ENCODE measurements at regions of chr16 and their contacts with region 1.

Region 1: DNA sequence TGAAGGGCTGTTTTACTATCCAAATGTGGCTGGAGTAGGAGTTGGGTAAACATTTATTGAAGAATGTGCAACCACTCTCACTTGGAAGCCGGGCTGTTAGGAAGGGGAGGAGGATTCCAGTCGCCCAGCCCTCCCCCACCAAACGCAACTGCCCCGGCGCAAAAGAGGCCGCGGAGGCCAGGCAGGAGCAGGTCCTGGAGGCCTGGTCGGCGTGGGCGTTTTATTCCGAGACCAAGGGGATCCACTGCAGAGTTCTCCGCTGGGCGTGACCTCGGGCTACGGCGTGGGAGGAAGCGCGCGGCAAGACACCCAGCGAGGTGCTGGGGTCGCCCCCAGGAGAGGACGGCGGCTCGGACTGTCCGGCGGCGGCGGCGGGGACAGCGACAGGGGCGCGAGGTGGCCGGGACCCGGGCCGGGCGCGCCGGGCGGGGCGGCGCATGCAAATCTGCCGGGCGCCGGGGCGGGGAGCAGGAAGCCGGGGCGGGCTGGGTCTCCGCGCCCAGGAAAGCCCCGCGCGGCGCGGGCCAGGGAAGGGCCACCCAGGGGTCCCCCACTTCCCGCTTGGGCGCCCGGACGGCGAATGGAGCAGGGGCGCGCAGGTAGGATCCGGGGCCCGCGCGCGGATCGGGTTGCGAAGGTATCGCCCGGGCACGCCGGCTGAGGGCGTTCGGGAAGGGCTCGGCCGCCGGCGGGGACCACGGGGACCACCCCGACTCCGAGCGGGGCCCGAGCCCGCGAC is at the start of gene IL4R:
- DNase-seq: peak; percentile 91
- ATAC-seq: peak; percentile 10
- H3K4me3 Mint-ChIP-seq: peak within 1 kb of the TSS; percentile 89
- H3K27ac Mint-ChIP-seq: peak within 1 kb of the TSS; percentile 98
- H3K4me1 Mint-ChIP-seq: peaks cover 26% of the 10 kb centered on the region
- H3K27me3 Mint-ChIP-seq: no peaks in the 10 kb centered on the region
- CTCF ChIP-seq: no peak
- total RNA-seq, gene IL4R: 236 to 245 TPM

Region 2: GRCh38 chr16:26877421-26877820 is 436.2 kb before region 1 on chr16:
- CTCF ChIA-PET with region 1: no interaction called
- POLR2A ChIA-PET with region 1: no interaction called
- intact Hi-C with region 1: no loop called
- DNase-seq: no peak
- ATAC-seq: no peak
- H3K4me3 Mint-ChIP-seq: no peak overlapping the region
- H3K27ac Mint-ChIP-seq: no peak overlapping the region
- H3K4me1 Mint-ChIP-seq: no peaks in the 10 kb centered on the region
- H3K27me3 Mint-ChIP-seq: peaks cover 14% of the 10 kb centered on the region
- CTCF ChIP-seq: no peak

Region 3: DNA sequence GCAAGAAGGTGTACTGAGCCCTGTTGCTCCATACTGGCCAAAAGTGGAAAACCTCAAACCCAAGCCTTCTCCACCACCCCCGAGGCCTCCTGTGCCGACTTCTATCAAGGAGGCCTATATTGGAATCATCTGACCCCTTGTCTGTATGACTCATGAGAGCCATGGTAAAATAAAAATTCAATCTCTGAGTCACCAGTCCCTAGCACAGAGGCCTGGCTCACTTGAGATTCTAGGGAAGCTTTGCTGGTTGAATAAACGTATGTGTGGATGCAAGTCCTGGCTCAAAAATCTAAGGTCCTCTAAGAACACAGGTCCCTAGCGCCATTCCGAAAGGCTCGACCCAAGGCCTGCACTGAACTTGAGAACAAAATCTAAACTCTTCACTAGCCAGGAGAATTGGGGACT is 60.1 kb before region 1 on chr16:
- CTCF ChIA-PET with region 1: interaction called, 6 read pairs
- POLR2A ChIA-PET with region 1: interaction called, 26 read pairs
- intact Hi-C with region 1: loop called (anchors 1 kb)
- DNase-seq: peak; percentile 44
- ATAC-seq: peak; percentile 52
- H3K4me3 Mint-ChIP-seq: peak overlapping the region; percentile 50
- H3K27ac Mint-ChIP-seq: peak overlapping the region; percentile 96
- H3K4me1 Mint-ChIP-seq: peaks cover 86% of the 10 kb centered on the region
- H3K27me3 Mint-ChIP-seq: no peaks in the 10 kb centered on the region
- CTCF ChIP-seq: no peak

Region 4: DNA sequence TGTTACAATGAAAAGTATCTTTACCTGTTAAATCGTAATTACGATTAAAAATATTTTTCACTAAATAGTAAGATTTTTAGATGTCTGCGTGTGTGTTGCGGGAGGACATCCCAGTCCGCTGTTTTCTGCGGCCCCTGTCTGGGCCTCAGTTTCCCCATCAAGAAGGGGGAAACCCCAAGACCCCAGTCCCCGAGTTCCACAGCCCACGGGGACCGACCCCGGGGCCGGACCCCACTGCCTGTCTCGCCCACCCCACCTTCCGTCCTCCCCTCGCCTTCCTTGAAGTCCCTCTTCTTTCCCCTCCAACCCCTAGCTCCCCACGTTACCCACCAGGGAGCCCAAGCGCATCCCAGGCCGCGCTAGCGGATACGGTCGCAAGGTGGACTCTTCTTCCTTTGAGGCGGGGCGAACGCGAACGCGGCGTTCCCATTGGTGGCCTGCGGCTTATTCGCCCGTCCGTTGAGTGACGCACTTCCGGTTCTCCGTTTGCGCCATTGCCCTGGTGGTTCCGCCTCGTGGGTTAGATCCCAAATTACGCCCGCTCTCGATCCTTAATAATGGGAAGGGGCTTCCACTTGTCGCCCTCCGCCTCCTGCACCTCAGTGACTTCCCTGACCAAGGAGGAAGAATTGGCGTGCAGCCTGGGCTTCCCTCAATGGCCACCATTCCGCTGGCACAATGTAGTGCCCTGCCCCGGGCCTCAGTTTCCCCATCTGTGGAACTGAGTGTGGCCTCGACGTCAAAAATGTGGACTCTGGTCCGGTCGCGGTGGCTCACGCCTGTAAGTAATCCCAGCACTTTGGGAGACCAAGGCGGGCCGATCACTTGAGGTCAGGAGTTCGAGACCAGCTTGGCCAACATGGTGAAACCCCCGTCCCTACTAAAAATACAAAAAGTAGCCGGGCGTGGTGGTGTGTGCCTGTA is 45.0 kb before region 1 on chr16 and contains the start of gene NSMCE1:
- CTCF ChIA-PET with region 1: interaction called, 17 read pairs
- POLR2A ChIA-PET with region 1: interaction called, 106 read pairs
- intact Hi-C with region 1: loop called (anchors 5 kb)
- DNase-seq: peak; percentile 99
- ATAC-seq: peak; percentile 97
- H3K4me3 Mint-ChIP-seq: peak within 1 kb of the TSS; percentile 91
- H3K27ac Mint-ChIP-seq: peak within 1 kb of the TSS; percentile 99
- H3K4me1 Mint-ChIP-seq: peaks cover 71% of the 10 kb centered on the region
- H3K27me3 Mint-ChIP-seq: no peaks in the 10 kb centered on the region
- CTCF ChIP-seq: no peak
- total RNA-seq, gene NSMCE1: 150 to 156 TPM

Region 5: DNA sequence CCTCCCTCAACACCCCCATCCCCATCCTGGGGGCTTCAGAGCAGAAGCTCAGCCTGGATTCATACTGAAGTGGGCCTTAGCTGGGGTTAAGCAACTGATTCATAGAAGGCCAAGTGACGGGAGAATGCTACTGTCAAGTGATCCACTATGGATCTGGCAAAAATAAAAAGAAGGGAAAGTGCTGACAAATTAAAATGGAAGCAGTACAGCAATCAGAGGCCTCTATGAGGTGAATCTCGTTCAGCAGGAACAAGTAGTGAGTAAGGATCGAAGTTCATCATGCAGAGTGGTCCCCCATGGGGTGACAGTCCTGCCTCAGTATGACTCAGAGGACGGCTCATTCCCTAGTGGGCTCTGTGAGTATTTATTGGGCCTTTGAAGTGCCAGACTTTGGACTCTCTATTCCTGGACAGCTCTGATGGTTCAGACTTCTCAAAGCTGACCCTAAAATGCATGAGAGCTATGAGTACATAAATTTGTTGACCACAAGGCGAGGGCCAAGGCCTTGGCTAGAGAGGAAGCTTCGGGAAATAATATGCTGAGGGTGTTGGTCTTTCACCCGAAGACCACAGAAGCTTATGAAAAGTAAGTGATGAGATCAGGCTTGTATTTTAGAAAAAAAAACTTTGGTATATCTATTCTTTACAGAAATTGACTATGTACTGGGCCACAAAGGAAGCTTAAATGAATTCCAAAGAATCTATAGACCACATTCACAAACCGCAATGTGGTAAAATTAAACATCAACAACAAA is 39.7 kb before region 1 on chr16:
- CTCF ChIA-PET with region 1: interaction called, 17 read pairs
- POLR2A ChIA-PET with region 1: interaction called, 106 read pairs
- intact Hi-C with region 1: loop called (anchors 5 kb)
- DNase-seq: peak; percentile 73
- ATAC-seq: peak; percentile 93
- H3K4me3 Mint-ChIP-seq: peak overlapping the region; percentile 54
- H3K27ac Mint-ChIP-seq: peak overlapping the region; percentile 96
- H3K4me1 Mint-ChIP-seq: peaks cover 57% of the 10 kb centered on the region
- H3K27me3 Mint-ChIP-seq: no peaks in the 10 kb centered on the region
- CTCF ChIP-seq: peak; percentile 25

Region 6: GRCh38 chr16:27286451-27286850 is 27.1 kb before region 1 on chr16:
- CTCF ChIA-PET with region 1: interaction called, 3 read pairs
- POLR2A ChIA-PET with region 1: interaction called, 40 read pairs
- intact Hi-C with region 1: no loop called
- DNase-seq: no peak
- ATAC-seq: no peak
- H3K4me3 Mint-ChIP-seq: no peak overlapping the region
- H3K27ac Mint-ChIP-seq: no peak overlapping the region
- H3K4me1 Mint-ChIP-seq: peaks cover 64% of the 10 kb centered on the region
- H3K27me3 Mint-ChIP-seq: peaks cover 2% of the 10 kb centered on the region
- CTCF ChIP-seq: no peak

Region 7: DNA sequence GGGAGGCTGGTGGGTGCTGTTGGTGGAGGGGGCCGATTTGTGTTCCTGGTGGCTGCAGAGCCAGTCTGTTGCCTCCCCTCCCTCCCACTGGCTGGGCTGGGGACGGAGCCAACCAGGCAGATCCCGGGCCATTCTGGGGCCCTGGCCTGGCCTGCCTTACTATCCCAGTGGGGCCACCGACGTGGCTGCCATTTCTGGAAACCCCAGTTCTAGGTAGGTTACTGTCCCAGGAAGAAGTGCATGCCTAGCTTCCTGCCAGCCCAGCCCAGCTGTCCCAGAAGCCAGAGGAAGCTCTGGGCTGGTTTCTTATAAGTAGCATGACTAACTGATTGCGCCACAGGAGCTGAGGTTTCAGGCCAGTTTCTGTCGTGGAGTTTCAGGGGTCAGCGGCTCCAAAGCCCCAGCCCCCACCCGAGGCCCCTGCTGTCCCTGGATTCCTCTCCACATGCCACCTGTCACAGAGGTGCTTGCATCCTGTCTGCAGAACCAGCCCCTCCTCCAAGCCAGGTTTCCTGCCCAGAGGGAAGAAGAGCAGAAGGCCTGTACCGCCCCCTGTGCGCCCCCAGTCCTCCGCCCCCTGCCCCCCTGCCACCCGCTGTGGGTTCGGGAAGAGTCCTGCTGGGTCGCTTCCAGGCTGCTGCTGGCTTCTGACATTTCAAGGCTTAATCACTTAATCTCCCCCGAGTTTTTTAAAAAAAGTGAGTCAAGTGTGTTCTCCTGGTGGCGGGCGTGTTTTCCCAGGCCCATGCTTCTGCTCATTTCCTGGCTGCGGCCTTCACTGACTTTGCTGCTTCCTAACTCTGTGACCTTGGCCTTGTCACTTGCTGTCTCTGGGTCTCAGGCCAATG is 13.4 kb after region 1 on chr16:
- CTCF ChIA-PET with region 1: interaction called, 4 read pairs
- POLR2A ChIA-PET with region 1: interaction called, 29 read pairs
- intact Hi-C with region 1: no loop called
- DNase-seq: peak; percentile 69
- ATAC-seq: peak; percentile 70
- H3K4me3 Mint-ChIP-seq: peak overlapping the region; percentile 49
- H3K27ac Mint-ChIP-seq: peak overlapping the region; percentile 93
- H3K4me1 Mint-ChIP-seq: peaks cover 75% of the 10 kb centered on the region
- H3K27me3 Mint-ChIP-seq: no peaks in the 10 kb centered on the region
- CTCF ChIP-seq: no peak

Region 8: DNA sequence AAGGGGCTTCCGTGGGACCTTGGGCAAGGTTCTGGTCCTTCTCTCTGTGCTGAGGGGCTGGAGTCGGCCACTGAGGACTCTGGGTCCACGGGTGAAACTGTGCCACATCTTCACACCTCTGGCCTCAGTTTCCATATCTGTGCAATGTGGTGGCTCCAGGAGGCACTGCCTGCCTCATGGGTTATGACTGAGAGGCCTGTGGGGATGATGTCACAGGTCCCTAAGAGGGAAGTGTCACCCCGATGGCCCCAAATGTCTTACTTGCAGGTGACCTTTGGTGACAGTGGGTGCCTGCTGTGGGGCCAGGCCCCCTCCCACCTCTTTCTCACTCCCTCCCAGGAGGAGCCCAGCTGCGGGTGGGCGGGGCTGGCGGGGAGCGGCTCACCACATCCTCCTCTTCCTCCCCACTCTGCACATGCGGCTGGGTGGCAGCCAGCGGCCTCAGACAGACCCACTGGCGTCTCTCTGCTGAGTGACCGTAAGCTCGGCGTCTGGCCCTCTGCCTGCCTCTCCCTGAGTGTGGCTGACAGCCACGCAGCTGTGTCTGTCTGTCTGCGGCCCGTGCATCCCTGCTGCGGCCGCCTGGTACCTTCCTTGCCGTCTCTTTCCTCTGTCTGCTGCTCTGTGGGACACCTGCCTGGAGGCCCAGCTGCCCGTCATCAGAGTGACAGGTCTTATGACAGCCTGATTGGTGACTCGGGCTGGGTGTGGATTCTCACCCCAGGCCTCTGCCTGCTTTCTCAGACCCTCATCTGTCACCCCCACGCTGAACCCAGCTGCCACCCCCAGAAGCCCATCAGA is 88.4 kb after region 1 on chr16 and contains the start of gene IL21R:
- CTCF ChIA-PET with region 1: interaction called, 4 read pairs
- POLR2A ChIA-PET with region 1: interaction called, 110 read pairs
- intact Hi-C with region 1: no loop called
- DNase-seq: peak; percentile 95
- ATAC-seq: peak; percentile 74
- H3K4me3 Mint-ChIP-seq: peak within 1 kb of the TSS; percentile 99
- H3K27ac Mint-ChIP-seq: peak within 1 kb of the TSS; percentile 96
- H3K4me1 Mint-ChIP-seq: peaks cover 37% of the 10 kb centered on the region
- H3K27me3 Mint-ChIP-seq: no peaks in the 10 kb centered on the region
- CTCF ChIP-seq: no peak
- total RNA-seq, gene IL21R: 95.6 to 97.2 TPM